Endothelial cell of umbilical vein (primary cell): ENCODE measurements at regions of chr6 and their contacts with region 1.

Region 1: DNA sequence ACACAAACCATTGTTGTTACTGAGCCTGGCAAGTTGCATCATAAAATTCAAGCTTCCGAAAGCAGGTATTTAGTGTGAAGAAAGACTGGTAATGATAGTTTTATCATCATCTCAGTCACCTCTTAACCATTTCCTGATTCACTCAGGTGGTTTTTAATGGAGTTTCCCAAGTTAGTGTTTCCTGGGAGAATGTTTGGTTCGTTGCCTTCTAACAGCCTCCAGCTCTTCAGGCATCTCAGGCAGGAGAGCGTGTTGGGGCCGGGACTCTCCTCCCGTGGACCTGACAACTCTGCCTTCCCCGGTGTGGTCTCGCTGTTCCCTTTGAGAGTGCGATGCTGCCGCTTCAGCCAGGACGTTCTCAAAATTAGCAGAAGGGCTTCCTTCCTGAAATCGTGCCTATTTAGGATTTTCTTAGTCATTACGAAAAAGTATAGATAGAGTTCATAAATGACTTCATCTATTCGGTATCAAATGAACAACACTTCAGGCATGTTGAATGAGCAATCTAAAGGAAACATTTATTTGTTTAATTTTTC is 105.0 kb upstream of the QKI start:
- DNase-seq: peak; percentile 63
- H3K4me3 ChIP-seq: no peak overlapping the region
- H3K27ac ChIP-seq: peak overlapping the region; percentile 63
- H3K4me1 ChIP-seq: peaks cover 25% of the 10 kb centered on the region
- H3K27me3 ChIP-seq: no peaks in the 10 kb centered on the region
- CTCF ChIP-seq: no peak
- POLR2A ChIP-seq: no peak

Region 2: DNA sequence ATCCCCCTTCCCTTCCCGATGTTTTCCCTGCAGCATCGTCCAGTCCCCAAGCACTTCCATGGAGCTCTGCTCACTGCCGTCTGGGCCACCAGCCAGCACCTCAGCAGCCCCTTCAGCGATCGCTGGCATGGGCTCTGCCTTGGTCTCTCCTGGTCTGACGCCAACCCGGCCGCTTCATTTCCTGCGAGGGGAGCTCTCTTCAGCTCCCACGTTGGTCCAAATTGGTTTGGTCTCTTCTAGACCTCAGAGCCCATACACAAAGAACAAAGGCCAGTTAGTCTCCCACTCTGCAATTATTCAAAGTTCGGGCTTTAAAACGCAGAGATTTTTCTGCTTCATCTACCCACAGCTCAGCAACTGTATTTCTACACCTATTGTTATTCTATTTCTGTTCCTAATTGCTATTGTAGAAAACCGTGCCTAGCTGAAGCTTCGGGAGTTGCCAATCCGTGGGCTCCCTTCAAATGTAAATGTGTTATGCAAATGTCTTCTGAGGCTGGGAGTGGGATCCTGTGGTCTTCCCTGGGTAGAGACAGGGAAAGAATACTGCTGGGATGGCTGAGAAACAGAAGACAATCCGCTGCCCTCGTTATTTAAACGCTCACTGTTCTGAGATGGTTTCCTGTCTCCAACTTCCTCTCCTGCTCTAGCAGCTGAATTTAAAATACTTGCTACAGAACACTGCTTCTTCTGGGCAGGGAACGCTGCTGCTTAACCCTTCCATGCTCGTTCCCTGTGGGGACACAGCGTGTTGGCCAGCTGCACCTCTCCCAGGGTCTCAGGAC is 49.3 kb before region 1 on chr6:
- CTCF ChIA-PET with region 1: no interaction called
- POLR2A ChIA-PET with region 1: no interaction called
- dilution Hi-C with region 1: no loop called
- intact Hi-C with region 1: loop called (anchors 2 kb)
- DNase-seq: peak; percentile 48
- H3K4me3 ChIP-seq: peak overlapping the region in 2 of 3 experiments; percentile 21 to 38
- H3K27ac ChIP-seq: no peak overlapping the region
- H3K4me1 ChIP-seq: peaks cover 9% of the 10 kb centered on the region
- H3K27me3 ChIP-seq: no peaks in the 10 kb centered on the region
- CTCF ChIP-seq: no peak
- POLR2A ChIP-seq: no peak

Region 3: DNA sequence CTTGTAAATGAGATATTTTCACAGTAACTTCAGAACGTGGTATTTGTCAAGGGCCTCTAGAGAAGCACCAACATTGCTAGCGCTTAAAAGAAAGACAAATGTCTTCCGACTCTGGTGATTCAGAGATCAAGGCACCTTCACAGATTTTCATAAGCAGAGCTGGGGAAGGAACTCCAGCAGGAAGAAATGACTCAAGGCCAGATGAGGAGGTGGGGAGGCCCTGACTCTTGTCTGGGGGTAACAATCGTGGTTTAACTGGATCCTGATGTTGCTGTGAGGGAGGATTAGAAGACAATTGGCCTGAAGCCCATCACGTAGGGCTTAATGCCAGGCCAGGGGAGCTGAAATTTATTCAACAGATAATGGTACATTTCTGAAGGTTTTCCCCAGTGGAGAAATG is 17.9 kb before region 1 on chr6:
- CTCF ChIA-PET with region 1: interaction called, 26 read pairs
- POLR2A ChIA-PET with region 1: no interaction called
- dilution Hi-C with region 1: no loop called
- intact Hi-C with region 1: loop called (anchors 2 kb)
- DNase-seq: peak; percentile 67
- H3K4me3 ChIP-seq: no peak overlapping the region
- H3K27ac ChIP-seq: peak overlapping the region; percentile 25
- H3K4me1 ChIP-seq: peaks cover 10% of the 10 kb centered on the region
- H3K27me3 ChIP-seq: no peaks in the 10 kb centered on the region
- CTCF ChIP-seq: no peak
- POLR2A ChIP-seq: no peak

Region 4: GRCh38 chr6:163296835-163297519 is 12.6 kb before region 1 on chr6:
- CTCF ChIA-PET with region 1: interaction called, 26 read pairs
- POLR2A ChIA-PET with region 1: no interaction called
- dilution Hi-C with region 1: no loop called
- intact Hi-C with region 1: no loop called
- DNase-seq: no peak
- H3K4me3 ChIP-seq: no peak overlapping the region
- H3K27ac ChIP-seq: no peak overlapping the region
- H3K4me1 ChIP-seq: peaks cover 1% of the 10 kb centered on the region
- H3K27me3 ChIP-seq: no peaks in the 10 kb centered on the region
- CTCF ChIP-seq: no peak
- POLR2A ChIP-seq: no peak